ENCODE measurements at regions of chr2 and their contacts with region 1.

Region 1: GRCh38 chr2:11411768-11412448 is 54.1 kb downstream of the E2F6 start:
- DNase-seq: no peak
- H3K4me3 ChIP-seq: peak overlapping the region; percentile 36 to 57 (median 41)
- H3K27ac ChIP-seq: no peak overlapping the region
- H3K4me1 ChIP-seq: peaks cover 7 to 28% (median 21%) of the 10 kb centered on the region in 4 donors
- H3K27me3 ChIP-seq: no peaks in the 10 kb centered on the region
- CTCF ChIP-seq: peak; percentile 74 to 84 (median 78)
- EP300 ChIP-seq: no peak
- POLR2A ChIP-seq: no peak

Region 2: GRCh38 chr2:11234309-11234708 is 177.6 kb before region 1 on chr2:
- intact Hi-C with region 1: loop called (anchors 2 kb)
- DNase-seq: no peak
- H3K4me3 ChIP-seq: no peak overlapping the region
- H3K27ac ChIP-seq: no peak overlapping the region
- H3K4me1 ChIP-seq: peaks cover 11 to 17% (median 13%) of the 10 kb centered on the region in 4 donors
- H3K27me3 ChIP-seq: no peaks in the 10 kb centered on the region
- CTCF ChIP-seq: peak; percentile 52 to 59 (median 54)
- EP300 ChIP-seq: no peak
- POLR2A ChIP-seq: no peak

Region 3: GRCh38 chr2:11344342-11344955 is 67.5 kb before region 1 on chr2 and contains the start of gene ROCK2:
- intact Hi-C with region 1: loop called (anchors 5 kb)
- DNase-seq: peak; percentile 95
- H3K4me3 ChIP-seq: peak within 1 kb of the TSS; percentile 80 to 95 (median 91)
- H3K27ac ChIP-seq: peak within 1 kb of the TSS; percentile 98 to 100 (median 99)
- H3K4me1 ChIP-seq: peaks cover 19 to 52% (median 48%) of the 10 kb centered on the region in 4 donors
- H3K27me3 ChIP-seq: peaks cover 0 to 3% (median 0%) of the 10 kb centered on the region in 4 donors
- CTCF ChIP-seq: no peak
- EP300 ChIP-seq: no peak
- POLR2A ChIP-seq: peak; percentile 26
- total RNA-seq, gene ROCK2: 90.0 to 119 (median 101) TPM